K562 (cell line): ENCODE measurements at regions of chr13 and their contacts with region 1.

Region 1: GRCh38 chr13:112346173-112346898 is 29.8 kb upstream of the SPACA7 start:
- DNase-seq: peak in 1 of 4 experiments; percentile 6
- ATAC-seq: peak; percentile 66; the same call in 2 of the 3 replicates
- H3K4me3 ChIP-seq: no peak overlapping the region
- H3K27ac ChIP-seq: no peak overlapping the region
- H3K4me1 ChIP-seq: no peaks in the 10 kb centered on the region
- H3K27me3 ChIP-seq: peaks cover 9 to 70% of the 10 kb centered on the region in 2 experiments; a peak in 3 of 5 replicates
- CTCF ChIP-seq: no peak
- EP300 ChIP-seq: no peak
- POLR2A ChIP-seq: no peak
- RAD21 ChIP-seq: no peak

Region 2: DNA sequence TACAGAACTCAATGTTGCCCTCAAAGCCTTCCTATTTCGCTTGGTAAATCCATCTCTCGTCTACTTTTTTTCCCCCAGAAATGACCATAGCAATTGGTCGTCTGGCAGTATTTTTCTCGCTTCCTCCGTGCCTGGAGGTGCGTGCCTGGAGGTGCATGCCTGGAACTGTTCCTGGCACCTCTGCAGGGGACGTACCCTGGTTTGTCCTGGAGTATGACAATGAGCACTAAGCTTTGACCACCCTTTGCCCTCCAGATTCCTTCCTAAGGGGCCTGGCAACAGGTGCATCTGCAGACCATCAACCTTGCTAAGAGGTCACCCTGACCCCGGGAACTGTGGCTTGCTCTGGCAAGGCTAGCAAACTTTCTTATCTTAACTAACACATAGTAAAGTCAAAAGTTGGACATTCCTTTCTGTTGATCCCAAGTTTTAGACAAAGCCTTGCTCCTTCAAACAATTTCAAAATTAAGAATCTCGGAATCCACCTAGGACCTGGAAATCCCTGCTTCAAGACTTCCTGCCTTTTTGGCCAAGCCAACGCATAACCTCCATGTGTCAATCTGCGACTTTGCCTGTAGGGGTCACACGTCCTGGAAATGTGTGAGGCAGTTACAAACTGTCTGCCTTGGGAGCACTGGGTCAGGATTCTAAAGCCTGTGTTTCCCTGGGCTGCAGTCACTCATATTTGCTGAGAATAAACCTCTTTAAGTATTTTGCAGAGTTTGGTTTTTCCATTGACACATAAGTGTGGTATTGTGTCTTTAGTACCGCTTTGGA is 270.4 kb after region 1 on chr13:
- CTCF ChIA-PET with region 1: no interaction called
- POLR2A ChIA-PET with region 1: no interaction called
- in situ Hi-C with region 1: no loop called
- intact Hi-C with region 1: loop called (anchors 10 kb)
- DNase-seq: peak; percentile 34 to 60 (median 58)
- ATAC-seq: peak; percentile 90
- H3K4me3 ChIP-seq: no peak overlapping the region
- H3K27ac ChIP-seq: no peak overlapping the region
- H3K4me1 ChIP-seq: no peaks in the 10 kb centered on the region; a peak in 1 of 5 replicates
- H3K27me3 ChIP-seq: peaks cover 5 to 62% of the 10 kb centered on the region in 2 experiments; a peak in 4 of 5 replicates
- CTCF ChIP-seq: peak; percentile 54 to 65 (median 62)
- EP300 ChIP-seq: no peak
- POLR2A ChIP-seq: no peak
- RAD21 ChIP-seq: peak in 1 of 2 experiments; percentile 39; a peak in 2 of 4 replicates